Activated CD4-positive, alpha-beta T cell treated with anti-CD3 and anti-CD28 coated beads, Interleukin-2, amount 10 ng/mL, durations not matched to agents 24 days and 14 days (primary cell): ENCODE measurements at regions of chr12 and their contacts with region 1.

Region 1: DNA sequence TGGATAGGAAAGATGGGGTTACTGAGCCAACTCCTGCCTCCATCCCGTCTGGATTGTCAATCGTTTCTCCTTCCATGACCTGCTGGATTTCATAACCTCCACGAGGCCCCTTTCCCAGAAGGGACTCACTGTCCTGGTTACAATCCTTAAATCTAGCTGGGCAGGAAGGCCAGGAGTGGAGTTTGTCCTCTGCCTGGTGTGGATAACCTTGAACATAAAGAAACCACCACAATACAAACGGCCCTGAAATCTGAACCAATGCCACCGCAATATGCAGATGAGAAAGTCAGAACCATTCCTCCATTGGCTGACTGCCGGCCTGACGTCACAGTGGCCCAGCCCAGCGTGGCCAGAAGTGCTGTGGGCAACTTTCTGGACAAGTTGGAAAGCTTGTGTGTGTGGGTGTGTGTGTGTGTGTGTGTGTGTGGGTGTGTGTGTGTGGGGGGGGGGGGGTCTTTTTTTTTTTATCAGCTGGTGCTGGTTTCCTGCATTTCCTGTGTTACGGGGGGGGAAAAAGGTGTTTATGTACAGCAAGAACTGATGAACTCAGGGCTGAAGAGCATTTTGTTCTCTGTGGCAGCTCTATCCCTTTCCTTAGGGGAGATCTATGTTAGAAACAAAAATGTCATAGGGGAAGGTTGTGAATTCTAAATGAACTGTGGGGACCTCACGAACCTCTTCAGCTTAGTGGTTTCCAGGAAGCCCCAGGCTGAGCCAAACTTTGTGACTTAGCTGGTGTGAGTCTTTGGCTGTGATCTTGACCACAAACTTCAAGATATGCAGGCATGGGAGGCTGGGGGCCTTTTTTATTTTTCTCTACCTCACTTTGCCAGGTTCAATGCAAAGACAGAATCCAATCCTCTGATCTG is 81.6 kb upstream of the MED13L start:
- DNase-seq: peak; percentile 90
- H3K4me3 Mint-ChIP-seq: peak overlapping the region; percentile 78
- H3K27ac Mint-ChIP-seq: peak overlapping the region; percentile 85
- H3K4me1 Mint-ChIP-seq: peaks cover 24% of the 10 kb centered on the region
- H3K27me3 Mint-ChIP-seq: no peaks in the 10 kb centered on the region

Region 2: DNA sequence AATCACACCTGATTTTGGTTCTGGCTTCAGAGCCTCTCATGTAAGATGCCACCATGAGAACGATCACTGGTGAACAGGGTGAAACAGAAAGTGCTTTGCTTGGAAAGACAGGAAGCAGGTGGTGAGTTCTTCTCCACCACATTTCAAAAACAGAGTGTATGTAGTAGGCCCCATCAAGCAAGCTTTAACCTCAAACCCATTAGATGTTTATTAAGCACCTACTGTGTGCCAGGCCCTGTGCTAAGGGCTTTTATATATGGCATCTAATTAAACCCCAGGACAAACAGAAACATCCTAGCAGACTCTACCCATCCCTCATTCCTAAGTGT is 33.8 kb before region 1 on chr12:
- intact Hi-C with region 1: loop called (anchors 2 kb)
- DNase-seq: peak; percentile 84
- H3K4me3 Mint-ChIP-seq: peak overlapping the region; percentile 51
- H3K27ac Mint-ChIP-seq: peak overlapping the region; percentile 81
- H3K4me1 Mint-ChIP-seq: peaks cover 29% of the 10 kb centered on the region
- H3K27me3 Mint-ChIP-seq: no peaks in the 10 kb centered on the region